Esophagus muscularis mucosa (tissue), 4 donors: ENCODE measurements at regions of chr2 and their contacts with region 1.

Region 1: GRCh38 chr2:219543601-219544358 is at the starts of genes CHPF and TMEM198:
- DNase-seq: peak; percentile 99
- H3K4me3 ChIP-seq: peak within 1 kb of the TSS; percentile 67 to 83 (median 77)
- H3K27ac ChIP-seq: peak within 1 kb of the TSS; percentile 93 to 95 (median 94)
- H3K4me1 ChIP-seq: peaks cover 26 to 46% (median 42%) of the 10 kb centered on the region in 4 donors
- H3K27me3 ChIP-seq: peaks cover 0 to 4% (median 0%) of the 10 kb centered on the region in 4 donors
- CTCF ChIP-seq: no peak
- EP300 ChIP-seq: no peak
- POLR2A ChIP-seq: no peak
- total RNA-seq, gene CHPF: 44.4 to 67.8 (median 58.4) TPM
- total RNA-seq, gene TMEM198: 3.7 to 4.7 (median 4.2) TPM

Region 2: GRCh38 chr2:219642465-219643080 is 98.8 kb after region 1 on chr2:
- intact Hi-C with region 1: loop called (anchors 2 kb)
- DNase-seq: peak; percentile 99
- H3K4me3 ChIP-seq: no peak overlapping the region
- H3K27ac ChIP-seq: peak overlapping the region; percentile 61 to 78 (median 64)
- H3K4me1 ChIP-seq: peaks cover 27 to 39% (median 32%) of the 10 kb centered on the region in 4 donors
- H3K27me3 ChIP-seq: no peaks in the 10 kb centered on the region
- CTCF ChIP-seq: peak; percentile 96 to 100 (median 99)
- EP300 ChIP-seq: no peak
- POLR2A ChIP-seq: no peak

Region 3: DNA sequence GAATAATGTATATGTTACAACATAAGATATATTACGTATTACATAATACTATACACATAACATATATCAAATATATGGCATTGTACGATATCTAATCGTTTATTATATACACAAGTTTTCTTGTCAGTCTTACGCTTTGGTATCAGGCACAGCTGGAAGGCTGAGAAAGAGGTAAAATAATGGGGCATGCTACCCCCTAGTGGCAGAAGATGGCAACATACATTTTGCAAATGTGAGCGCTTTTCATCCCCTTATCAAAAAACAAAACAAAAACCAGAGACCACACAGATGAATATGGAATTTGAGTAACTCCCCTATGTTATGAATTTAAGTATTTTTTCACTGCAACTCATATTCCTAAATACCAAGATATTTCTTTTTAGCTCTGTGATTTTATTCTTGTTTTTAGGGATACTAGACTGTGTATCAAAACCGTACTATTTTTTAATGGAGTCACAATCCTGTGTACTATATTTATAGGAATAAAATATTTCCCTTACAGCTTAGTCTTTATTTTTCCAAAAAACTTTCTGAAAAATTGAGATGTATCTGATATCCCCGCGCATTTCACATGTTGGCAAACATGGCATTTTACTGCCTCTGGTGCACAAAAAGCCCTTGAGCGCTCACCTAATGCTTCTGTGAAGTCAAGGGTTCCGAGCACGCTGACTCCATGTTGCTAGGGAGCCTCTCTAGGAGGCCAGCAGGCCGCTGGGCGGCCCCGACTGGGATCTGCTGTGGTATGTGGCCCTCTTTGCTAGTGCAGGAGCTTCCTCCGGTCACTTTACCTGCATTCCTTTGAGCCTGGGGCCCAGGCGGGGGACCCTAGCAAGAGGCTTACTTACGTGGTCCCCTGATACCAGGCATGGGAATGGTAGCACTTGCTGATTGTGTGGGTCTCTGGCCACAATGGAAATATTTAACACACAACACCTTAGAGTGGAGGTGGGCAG is 146.2 kb after region 1 on chr2:
- intact Hi-C with region 1: loop called (anchors 5 kb)
- DNase-seq: no peak
- H3K4me3 ChIP-seq: no peak overlapping the region
- H3K27ac ChIP-seq: peak overlapping the region in 1 of 4 donors; percentile 29
- H3K4me1 ChIP-seq: peaks cover 7 to 18% (median 16%) of the 10 kb centered on the region in 4 donors
- H3K27me3 ChIP-seq: peaks cover 0 to 16% (median 0%) of the 10 kb centered on the region in 4 donors
- CTCF ChIP-seq: peak; percentile 76 to 85 (median 78)
- EP300 ChIP-seq: no peak
- POLR2A ChIP-seq: no peak